Psoas muscle (tissue), 8 donors: ENCODE measurements at regions of chr9 and their contacts with region 1.

Region 1: DNA sequence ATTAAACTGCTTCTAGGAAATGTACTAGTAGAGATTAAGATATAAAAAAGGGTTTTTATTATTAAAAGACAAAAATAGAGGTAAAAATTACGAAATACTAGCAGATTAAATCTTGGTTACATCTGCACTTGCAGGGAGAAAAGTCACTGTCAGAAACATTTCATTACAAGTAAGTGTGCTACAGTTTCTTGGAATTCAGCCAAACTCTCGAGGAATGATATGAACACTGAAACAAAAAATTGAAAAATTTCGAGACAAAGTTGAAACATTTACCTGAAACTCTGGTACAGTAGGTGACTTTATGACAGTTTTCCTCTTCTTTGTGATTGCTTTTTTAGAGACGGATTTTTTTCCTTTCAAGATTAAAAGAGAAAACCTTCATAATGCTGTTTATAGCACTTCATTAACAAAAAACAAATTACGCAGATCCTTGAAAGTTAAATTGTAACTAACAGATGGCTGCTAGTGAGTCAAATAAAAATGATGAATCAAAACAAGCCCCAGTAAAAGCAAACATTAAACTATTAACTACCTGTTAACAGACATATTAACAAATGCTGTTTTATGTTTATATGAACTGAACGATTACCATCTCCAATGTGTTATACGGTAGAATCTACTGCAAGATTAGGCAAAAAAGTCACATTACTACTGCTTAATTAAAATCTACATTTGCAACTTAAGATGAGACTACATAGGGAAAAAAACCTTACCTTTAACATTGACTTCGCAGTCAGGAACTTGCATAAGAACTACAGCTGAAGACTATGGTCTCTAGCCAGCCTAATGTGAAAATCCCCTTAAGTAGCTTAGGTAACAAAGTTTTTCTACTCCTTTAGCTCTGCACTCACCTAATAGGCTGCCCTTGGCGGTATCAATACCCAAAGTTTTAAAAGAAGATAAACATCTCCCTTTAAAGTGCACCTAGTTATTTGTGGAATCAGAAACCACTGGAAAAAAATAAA is 61.4 kb downstream of the RANBP6 start:
- DNase-seq: no peak
- ATAC-seq: no peak
- H3K4me3 ChIP-seq: no peak overlapping the region
- H3K27ac ChIP-seq: no peak overlapping the region
- H3K4me1 ChIP-seq: peaks cover 16% of the 10 kb centered on the region
- H3K27me3 ChIP-seq: no peaks in the 10 kb centered on the region
- CTCF ChIP-seq: no peak

Region 2: GRCh38 chr9:5805478-5805877 is 148.5 kb before region 1 on chr9:
- intact Hi-C with region 1: no loop called
- DNase-seq: no peak
- ATAC-seq: no peak
- H3K4me3 ChIP-seq: no peak overlapping the region
- H3K27ac ChIP-seq: no peak overlapping the region
- H3K4me1 ChIP-seq: no peaks in the 10 kb centered on the region
- H3K27me3 ChIP-seq: no peaks in the 10 kb centered on the region
- CTCF ChIP-seq: no peak

Region 3: DNA sequence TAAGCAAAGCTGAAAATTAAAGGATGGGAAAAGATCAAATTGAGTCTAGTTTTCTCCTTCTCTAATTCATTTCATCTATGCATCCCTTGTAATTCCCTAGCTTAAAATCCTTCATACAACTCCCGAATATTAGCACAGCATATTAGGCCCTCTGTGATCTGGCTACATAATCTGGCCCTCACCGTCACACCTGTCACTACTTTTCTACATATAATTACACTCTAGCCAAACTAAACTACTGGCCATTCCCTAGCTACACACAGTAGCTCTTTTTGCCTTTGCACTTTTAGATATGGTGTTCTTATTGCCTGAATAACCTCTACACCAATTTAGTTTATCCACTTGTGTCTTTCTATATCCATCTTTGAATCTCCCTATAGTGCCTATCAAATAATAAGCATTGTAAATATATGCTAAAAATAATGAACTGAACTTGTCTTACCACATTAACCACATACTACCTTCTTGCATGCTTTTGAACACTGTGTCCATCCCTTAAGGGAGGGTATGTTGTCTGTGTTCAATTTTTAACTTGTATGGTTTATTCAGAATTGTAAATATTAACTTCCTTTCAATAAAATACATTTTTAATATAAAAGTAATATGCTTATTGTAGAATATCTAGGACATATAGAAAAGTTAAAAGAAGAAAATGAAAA is 45.5 kb after region 1 on chr9:
- intact Hi-C with region 1: loop called (anchors 5 to 10 kb)
- DNase-seq: no peak
- ATAC-seq: peak in 3 of 4 donors; percentile 48 to 68 (median 64)
- H3K4me3 ChIP-seq: no peak overlapping the region
- H3K27ac ChIP-seq: no peak overlapping the region
- H3K4me1 ChIP-seq: peaks cover 65% of the 10 kb centered on the region
- H3K27me3 ChIP-seq: no peaks in the 10 kb centered on the region
- CTCF ChIP-seq: no peak

Region 4: DNA sequence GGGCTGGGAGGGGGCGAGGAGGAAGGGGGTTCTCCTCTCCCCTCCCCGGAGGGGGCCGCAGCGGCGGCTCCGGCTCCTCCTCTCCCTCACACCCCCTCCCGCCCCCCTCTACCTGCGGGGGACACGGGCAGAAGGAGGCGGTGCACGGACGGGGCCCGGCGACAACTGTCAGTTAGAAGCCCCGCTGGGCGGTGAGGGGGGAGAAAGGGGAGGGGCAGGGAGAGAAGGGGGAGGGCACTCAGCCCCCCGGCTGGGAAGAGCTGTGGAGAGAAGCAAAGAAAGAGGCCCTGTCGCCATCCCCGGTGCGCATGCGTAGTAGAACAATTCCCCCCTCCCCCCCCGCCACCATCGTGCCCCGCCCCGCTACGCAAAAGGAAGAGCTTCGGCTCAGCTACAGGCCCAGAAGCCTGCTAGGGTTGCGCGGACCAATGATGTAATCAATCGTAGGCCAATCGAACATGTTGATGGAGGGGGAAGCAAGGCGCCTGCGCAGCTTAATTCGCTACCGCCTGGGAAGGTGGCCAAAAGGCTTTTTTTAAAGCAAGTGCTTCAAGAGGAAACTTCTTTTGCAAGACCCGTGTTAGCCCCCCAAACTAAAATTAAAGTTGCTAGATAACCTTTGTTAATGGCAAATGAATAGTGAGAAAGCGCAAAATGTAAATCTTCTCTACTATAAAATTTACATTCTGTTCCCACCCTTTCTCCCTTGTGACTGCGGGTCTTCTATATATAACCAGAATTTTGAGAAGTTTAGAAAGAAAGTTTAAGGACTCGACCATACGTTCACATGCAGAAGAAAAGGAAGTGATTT is 54.3 kb after region 1 on chr9:
- intact Hi-C with region 1: loop called in 1 of 2 experiments (anchors 10 kb)
- DNase-seq: peak; percentile 92 to 96
- ATAC-seq: peak; percentile 90 to 92 (median 91)
- H3K4me3 ChIP-seq: peak overlapping the region; percentile 92
- H3K27ac ChIP-seq: peak overlapping the region; percentile 95
- H3K4me1 ChIP-seq: peaks cover 58% of the 10 kb centered on the region
- H3K27me3 ChIP-seq: no peaks in the 10 kb centered on the region
- CTCF ChIP-seq: no peak

Region 5: GRCh38 chr9:6215562-6215961 is 261.5 kb after region 1 on chr9 and contains the start of gene IL33:
- intact Hi-C with region 1: no loop called
- DNase-seq: no peak
- ATAC-seq: peak in 1 of 4 donors; percentile 72
- H3K4me3 ChIP-seq: peak within 1 kb of the TSS; percentile 37
- H3K27ac ChIP-seq: no peak within 1 kb of the TSS
- H3K4me1 ChIP-seq: no peaks in the 10 kb centered on the region
- H3K27me3 ChIP-seq: no peaks in the 10 kb centered on the region
- CTCF ChIP-seq: no peak
- total RNA-seq, gene IL33: 4.0 to 11.5 (median 7.1) TPM